ENCODE measurements at regions of chr6 and their contacts with region 1.

Region 1: DNA sequence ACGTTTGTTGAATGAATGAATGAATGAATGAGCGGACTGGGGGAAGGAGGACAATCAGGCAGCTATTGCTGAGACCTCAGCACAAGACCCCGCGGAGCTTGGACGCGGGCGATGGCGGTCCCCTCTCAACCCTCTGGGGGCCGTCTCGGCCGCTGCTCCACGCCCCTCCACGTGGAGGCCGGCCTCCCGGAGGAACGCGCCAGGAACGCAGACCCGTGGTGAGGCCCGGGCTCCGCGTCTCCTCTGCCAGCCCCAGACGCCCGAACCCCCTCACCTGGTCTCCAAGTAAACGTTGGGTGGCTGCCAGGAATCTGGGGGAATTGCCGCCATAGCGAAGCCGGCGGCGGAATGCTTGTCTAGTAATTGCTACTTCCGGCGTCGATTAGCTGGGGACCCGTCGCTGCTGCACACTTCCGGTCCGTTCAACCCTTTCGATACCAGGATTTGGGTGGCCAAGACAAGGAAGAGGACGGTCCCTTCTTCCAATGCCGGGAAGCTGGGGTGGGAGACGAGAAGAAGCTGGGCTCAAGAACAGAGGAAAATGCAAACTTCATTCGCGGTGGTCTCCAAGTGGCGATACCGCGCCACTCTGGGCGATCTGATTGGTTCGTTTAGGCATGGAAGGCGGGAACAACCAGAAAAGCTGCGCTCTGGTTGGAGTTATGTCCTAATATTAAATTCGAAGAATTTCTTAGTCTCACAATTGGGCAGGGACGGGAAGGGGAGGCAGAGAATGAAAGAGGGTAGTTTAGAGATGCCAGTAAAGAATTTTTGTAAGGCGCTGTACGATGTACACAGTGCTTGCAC is at the start of gene PPIL1:
- DNase-seq: peak; percentile 86
- H3K4me3 Mint-ChIP-seq: peak within 1 kb of the TSS; percentile 92
- H3K27ac Mint-ChIP-seq: peak within 1 kb of the TSS; percentile 96
- H3K4me1 Mint-ChIP-seq: peaks cover 62% of the 10 kb centered on the region
- H3K27me3 Mint-ChIP-seq: peaks cover 8% of the 10 kb centered on the region

Region 2: DNA sequence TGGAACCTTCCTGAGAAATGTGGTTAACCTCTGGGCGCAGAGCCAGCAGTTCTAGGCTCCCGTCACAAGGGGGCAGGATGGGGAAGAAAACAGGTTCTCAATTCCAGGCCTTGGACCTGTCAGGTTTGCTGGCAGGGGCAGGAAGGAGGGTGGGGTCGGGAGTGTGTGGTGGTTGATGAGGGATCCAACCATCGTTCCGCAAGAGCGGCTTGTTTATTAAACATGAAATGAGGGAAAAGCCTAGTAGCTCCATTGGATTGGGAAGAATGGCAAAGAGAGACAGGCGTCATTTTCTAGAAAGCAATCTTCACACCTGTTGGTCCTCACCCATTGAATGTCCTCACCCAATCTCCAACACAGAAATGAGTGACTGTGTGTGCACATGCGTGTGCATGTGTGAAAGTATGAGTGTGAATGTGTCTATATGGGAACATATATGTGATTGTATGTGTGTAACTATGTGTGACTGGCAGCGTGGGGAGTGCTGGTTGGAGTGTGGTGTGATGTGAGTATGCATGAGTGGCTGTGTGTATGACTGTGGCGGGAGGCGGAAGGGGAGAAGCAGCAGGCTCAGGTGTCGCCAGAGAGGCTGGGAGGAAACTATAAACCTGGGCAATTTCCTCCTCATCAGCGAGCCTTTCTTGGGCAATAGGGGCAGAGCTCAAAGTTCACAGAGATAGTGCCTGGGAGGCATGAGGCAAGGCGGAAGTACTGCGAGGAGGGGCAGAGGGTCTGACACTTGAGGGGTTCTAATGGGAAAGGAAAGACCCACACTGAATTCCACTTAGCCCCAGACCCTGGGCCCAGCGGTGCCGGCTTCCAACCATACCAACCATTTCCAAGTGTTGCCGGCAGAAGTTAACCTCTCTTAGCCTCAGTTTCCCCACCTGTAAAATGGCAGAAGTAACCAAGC is 250.8 kb before region 1 on chr6:
- CTCF ChIA-PET with region 1: no interaction called
- DNase-seq: peak; percentile 86
- H3K4me3 Mint-ChIP-seq: no peak overlapping the region
- H3K27ac Mint-ChIP-seq: peak overlapping the region; percentile 60
- H3K4me1 Mint-ChIP-seq: peaks cover 35% of the 10 kb centered on the region
- H3K27me3 Mint-ChIP-seq: peaks cover 3% of the 10 kb centered on the region

Region 3: DNA sequence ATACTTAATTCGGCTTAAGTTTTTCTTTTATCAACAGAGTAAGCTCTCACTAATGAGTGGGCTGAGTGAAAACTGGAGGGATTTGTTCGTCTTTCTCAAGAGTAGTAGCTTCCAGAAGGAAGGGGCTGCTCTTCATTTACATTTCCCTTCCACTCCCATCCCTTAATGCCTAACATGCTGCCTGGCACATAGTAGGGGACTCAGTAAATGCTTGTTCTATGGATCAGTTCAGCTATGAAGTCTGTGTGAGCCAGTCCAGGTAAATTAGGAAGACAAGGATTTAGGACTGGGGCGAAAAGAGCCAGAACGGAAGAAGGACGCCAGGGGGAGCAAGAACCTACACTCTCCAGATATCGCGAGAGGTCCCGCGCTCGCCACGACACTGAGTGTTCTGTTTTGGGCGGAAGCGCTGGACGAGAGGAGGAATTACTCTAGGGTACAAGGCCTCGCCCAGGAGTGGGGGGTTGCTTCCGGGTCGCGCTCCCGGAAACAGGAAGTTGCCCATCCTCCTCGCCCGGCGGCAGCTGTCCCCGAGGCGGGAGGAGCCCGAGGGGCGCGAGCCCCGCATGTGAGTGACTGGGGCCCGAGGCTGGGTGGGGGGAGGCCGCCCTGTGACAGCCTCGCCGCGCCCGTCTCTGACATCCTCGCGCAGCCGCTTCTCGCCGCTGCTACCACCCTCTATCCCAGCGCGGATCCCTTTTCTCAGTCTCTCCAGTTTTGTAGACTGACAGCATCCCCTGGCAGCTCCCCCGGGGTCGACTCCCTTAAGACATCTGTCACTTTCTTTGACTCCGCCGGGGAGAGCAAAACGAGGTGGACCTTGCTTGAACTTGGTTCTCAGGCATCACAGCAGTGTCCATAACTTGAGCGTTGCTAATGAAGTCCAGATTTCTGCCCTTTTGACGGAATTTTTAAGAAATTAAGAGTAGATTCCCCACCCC is 11.1 kb after region 1 on chr6 and contains the start of gene C6orf89:
- CTCF ChIA-PET with region 1: interaction called, 51 read pairs
- DNase-seq: peak; percentile 99
- H3K4me3 Mint-ChIP-seq: peak within 1 kb of the TSS; percentile 90
- H3K27ac Mint-ChIP-seq: peak within 1 kb of the TSS; percentile 92
- H3K4me1 Mint-ChIP-seq: peaks cover 37% of the 10 kb centered on the region
- H3K27me3 Mint-ChIP-seq: no peaks in the 10 kb centered on the region

Region 4: GRCh38 chr6:36924131-36924530 is 49.5 kb after region 1 on chr6:
- CTCF ChIA-PET with region 1: no interaction called
- DNase-seq: no peak
- H3K4me3 Mint-ChIP-seq: no peak overlapping the region
- H3K27ac Mint-ChIP-seq: peak overlapping the region; percentile 53
- H3K4me1 Mint-ChIP-seq: peaks cover 29% of the 10 kb centered on the region
- H3K27me3 Mint-ChIP-seq: no peaks in the 10 kb centered on the region

Measured in activated naive CD4-positive, alpha-beta T cell treated with anti-CD3 and anti-CD28 coated beads, Interleukin-2, amount 10 ng/mL, durations not matched to agents 7 days and 5 days (primary cell).